AG04449 (cell line): ENCODE measurements at regions of chr15 and their contacts with region 1.

Region 1: DNA sequence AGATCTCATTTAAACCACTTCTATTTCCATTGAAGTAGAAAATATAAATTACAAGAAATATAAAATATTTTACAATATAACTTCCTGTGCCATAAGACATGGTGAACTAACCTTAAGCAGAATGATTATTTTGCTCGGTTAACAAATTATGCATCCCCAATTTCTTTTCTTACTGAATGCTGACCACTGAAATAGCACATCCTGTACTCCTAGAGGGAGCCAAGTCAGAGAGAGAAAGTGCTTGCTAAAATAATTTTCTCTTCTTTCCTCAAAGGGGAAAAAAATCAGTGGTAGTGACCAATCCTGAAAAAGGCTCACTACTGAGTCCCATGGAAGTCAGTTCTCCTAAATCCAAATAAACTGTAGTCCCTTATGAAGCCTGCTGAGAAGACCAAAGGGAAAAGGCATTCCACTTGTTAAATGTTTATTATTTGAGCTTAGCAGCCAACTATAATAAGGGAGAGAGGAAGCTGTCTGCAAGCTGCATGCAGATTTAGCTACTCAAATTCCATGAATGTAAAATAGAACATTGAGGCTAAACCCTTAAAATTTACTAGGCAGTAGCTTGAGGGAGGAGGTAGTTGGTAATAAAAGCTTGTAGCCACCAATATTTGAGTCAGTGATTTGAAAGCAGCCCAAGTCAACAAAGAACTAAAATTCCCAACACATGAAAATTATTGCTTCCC is 33.1 kb downstream of the CEP152 start:
- DNase-seq: peak; percentile 10
- H3K4me3 ChIP-seq: no peak overlapping the region
- CTCF ChIP-seq: no peak

Region 2: GRCh38 chr15:48800811-48801455 is 23.1 kb after region 1 on chr15:
- CTCF ChIA-PET with region 1: interaction called, 14 read pairs
- POLR2A ChIA-PET with region 1: no interaction called
- DNase-seq: no peak
- H3K4me3 ChIP-seq: no peak overlapping the region
- CTCF ChIP-seq: peak; percentile 10

Region 3: GRCh38 chr15:48913141-48913540 is 135.4 kb after region 1 on chr15:
- CTCF ChIA-PET with region 1: no interaction called
- POLR2A ChIA-PET with region 1: no interaction called
- DNase-seq: no peak
- H3K4me3 ChIP-seq: no peak overlapping the region
- CTCF ChIP-seq: no peak